ENCODE measurements at regions of chr16 and their contacts with region 1.

Region 1: GRCh38 chr16:3457434-3458252 is 14.2 kb downstream of the NAA60 start:
- DNase-seq: peak; percentile 89
- H3K4me3 ChIP-seq: peak overlapping the region; percentile 88 to 97 (median 95)
- H3K27ac ChIP-seq: peak overlapping the region; percentile 84
- H3K4me1 ChIP-seq: peaks cover 11% of the 10 kb centered on the region
- H3K27me3 ChIP-seq: no peaks in the 10 kb centered on the region
- CTCF ChIP-seq: peak in 1 of 2 donors; percentile 54

Region 2: GRCh38 chr16:3264137-3265036 is 193.3 kb before region 1 on chr16:
- CTCF ChIA-PET with region 1: no interaction called
- dilution Hi-C with region 1: no loop called
- in situ Hi-C with region 1: no loop called
- intact Hi-C with region 1: loop called (anchors 5 kb)
- DNase-seq: peak; percentile 98
- H3K4me3 ChIP-seq: peak overlapping the region; percentile 74 to 82 (median 77)
- H3K27ac ChIP-seq: peak overlapping the region; percentile 49
- H3K4me1 ChIP-seq: peaks cover 7% of the 10 kb centered on the region
- H3K27me3 ChIP-seq: no peaks in the 10 kb centered on the region
- CTCF ChIP-seq: peak; percentile 7 to 34

Region 3: GRCh38 chr16:3282730-3283524 is 174.7 kb before region 1 on chr16 and contains the start of gene ZNF263:
- CTCF ChIA-PET with region 1: no interaction called
- dilution Hi-C with region 1: no loop called
- in situ Hi-C with region 1: no loop called
- intact Hi-C with region 1: loop called (anchors 5 kb)
- DNase-seq: peak; percentile 98
- H3K4me3 ChIP-seq: peak within 1 kb of the TSS; percentile 86 to 98 (median 91)
- H3K27ac ChIP-seq: peak within 1 kb of the TSS; percentile 96
- H3K4me1 ChIP-seq: peaks cover 12% of the 10 kb centered on the region
- H3K27me3 ChIP-seq: no peaks in the 10 kb centered on the region
- CTCF ChIP-seq: no peak
- total RNA-seq, gene ZNF263: 23.7 to 54.8 TPM

Region 4: GRCh38 chr16:3305109-3306068 is 152.3 kb before region 1 on chr16 and contains the starts of genes TIGD7 and ZNF75A:
- CTCF ChIA-PET with region 1: no interaction called
- dilution Hi-C with region 1: no loop called
- in situ Hi-C with region 1: no loop called
- intact Hi-C with region 1: loop called (anchors 1 kb)
- DNase-seq: peak; percentile 87
- H3K4me3 ChIP-seq: peak within 1 kb of the TSS; percentile 60 to 67 (median 62)
- H3K27ac ChIP-seq: peak within 1 kb of the TSS; percentile 45
- H3K4me1 ChIP-seq: peaks cover 6% of the 10 kb centered on the region
- H3K27me3 ChIP-seq: no peaks in the 10 kb centered on the region
- CTCF ChIP-seq: peak in 1 of 2 donors; percentile 17
- total RNA-seq, gene TIGD7: 1.9 to 2.3 TPM
- total RNA-seq, gene ZNF75A: 13.7 to 24.6 TPM

Region 5: GRCh38 chr16:3358884-3359283 is 98.8 kb before region 1 on chr16:
- CTCF ChIA-PET with region 1: no interaction called
- dilution Hi-C with region 1: loop called (anchors 5 kb)
- in situ Hi-C with region 1: no loop called
- intact Hi-C with region 1: no loop called
- DNase-seq: no peak
- H3K4me3 ChIP-seq: no peak overlapping the region
- H3K27ac ChIP-seq: no peak overlapping the region
- H3K4me1 ChIP-seq: no peaks in the 10 kb centered on the region
- H3K27me3 ChIP-seq: no peaks in the 10 kb centered on the region
- CTCF ChIP-seq: no peak

Region 6: DNA sequence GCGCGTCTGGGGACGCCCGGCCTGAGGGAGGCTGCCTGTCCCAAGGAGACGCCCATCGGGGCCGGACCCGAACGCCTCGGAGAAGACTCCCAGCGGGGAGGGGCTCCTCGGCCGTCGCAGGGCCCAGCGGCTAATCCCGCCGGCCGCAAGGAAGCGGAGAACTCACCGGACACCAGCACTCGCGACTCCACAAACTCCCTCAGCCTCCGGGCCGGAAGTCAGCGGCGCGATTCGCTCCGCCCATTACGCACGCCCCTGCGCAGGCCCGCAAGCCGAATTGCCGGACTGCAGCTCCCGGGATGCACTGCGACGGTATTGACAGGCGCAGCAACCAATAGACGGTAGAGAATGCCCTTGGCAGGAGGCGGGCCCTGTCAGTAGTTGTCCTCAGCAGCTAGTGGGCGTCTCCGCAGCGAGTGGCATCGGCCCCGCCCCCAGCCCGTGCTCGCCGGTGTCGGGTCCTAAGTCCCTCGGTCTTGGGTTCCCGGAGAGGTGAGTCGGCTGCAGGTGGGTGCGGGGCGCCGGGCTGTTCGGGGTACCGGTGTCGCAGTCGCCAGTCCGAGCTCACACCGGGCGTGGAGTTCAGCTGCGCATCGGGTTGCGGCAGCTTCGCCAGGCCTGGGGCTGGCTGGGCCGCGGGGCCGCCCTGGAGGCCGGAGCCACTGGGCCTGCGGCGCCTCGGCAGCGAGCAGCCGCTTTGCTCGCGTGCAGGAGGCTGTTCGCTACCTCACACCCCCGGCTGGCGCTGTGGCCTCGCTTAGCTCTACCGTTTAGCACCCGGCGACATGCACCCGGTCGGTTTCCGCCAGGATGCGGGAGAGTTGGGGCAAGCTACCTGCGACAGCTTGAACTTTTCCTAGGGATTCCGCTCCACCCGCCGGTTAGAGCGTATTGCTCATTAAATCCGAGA is 56.6 kb before region 1 on chr16 and contains the starts of genes ZNF174 and ZSCAN32:
- CTCF ChIA-PET with region 1: no interaction called
- dilution Hi-C with region 1: no loop called
- in situ Hi-C with region 1: loop called in 1 of 2 experiments (anchors 10 kb)
- intact Hi-C with region 1: loop called (anchors 1 kb)
- DNase-seq: peak; percentile 99
- H3K4me3 ChIP-seq: peak within 1 kb of the TSS; percentile 61 to 88 (median 79)
- H3K27ac ChIP-seq: peak within 1 kb of the TSS; percentile 60
- H3K4me1 ChIP-seq: peaks cover 14% of the 10 kb centered on the region
- H3K27me3 ChIP-seq: no peaks in the 10 kb centered on the region
- CTCF ChIP-seq: peak in 1 of 2 donors; percentile 6
- total RNA-seq, gene ZNF174: 5.3 to 7.7 TPM
- total RNA-seq, gene ZSCAN32: 13.1 to 15.8 TPM

Region 7: DNA sequence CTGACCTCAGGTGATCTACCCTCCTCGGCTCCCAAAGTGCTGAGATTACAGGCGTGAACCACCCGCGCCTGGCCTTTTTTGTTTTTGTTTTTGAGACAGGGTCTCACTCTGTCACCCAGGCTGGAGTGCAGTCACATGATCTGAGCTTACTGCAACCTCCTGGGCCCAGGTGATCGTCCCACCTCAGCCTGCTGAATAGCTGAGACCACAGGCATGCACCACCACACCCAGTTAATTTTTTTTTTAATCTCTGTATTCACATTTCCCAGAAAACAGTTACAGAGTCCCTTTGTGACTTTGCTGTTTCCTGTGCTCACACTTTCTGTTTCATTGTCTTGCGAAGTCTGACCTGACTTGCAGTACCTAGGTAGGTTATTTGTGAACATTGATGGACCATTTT is 45.9 kb after region 1 on chr16:
- CTCF ChIA-PET with region 1: no interaction called
- dilution Hi-C with region 1: loop called (anchors 5 kb)
- in situ Hi-C with region 1: no loop called
- intact Hi-C with region 1: loop called (anchors 1 kb)
- DNase-seq: peak; percentile 62
- H3K4me3 ChIP-seq: no peak overlapping the region
- H3K27ac ChIP-seq: peak overlapping the region; percentile 65
- H3K4me1 ChIP-seq: peaks cover 18% of the 10 kb centered on the region
- H3K27me3 ChIP-seq: no peaks in the 10 kb centered on the region
- CTCF ChIP-seq: no peak

Measured in mammary epithelial cell (primary cell).